HepG2 (cell line): ENCODE measurements at regions of chr9 and their contacts with region 1.

Region 1: DNA sequence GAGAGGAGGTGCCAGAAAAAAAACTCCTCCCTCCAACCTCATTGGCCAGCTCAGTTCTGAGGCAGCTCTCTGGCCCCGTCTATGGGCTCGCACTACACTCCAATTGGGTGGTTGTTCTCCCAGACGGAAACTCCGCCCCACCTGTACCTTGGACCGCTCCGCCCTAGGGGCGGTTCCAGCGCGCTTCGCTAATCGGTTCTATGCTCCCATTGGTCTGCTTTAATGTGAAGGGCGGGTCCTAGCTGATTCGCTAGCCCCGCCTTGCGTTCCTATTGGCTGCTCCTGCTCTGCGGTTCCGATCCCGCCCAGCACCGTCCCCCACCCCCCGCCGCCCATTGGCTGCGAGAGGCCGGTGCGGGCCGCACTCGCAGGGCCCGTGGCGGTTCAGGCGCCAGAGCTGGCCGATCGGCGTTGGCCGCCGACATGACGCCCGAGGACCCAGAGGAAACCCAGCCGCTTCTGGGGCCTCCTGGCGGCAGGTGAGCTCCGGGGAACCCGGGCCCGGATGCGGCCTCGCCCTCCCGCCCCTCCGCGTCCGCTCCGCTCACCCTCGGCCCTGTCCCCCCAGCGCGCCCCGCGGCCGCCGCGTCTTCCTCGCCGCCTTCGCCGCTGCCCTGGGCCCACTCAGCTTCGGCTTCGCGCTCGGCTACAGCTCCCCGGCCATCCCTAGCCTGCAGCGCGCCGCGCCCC is at the start of gene SLC2A8:
- DNase-seq: peak; percentile 99
- ATAC-seq: peak; percentile 83
- H3K4me3 ChIP-seq: peak within 1 kb of the TSS; percentile 86 to 96 (median 88)
- H3K27ac ChIP-seq: peak within 1 kb of the TSS; percentile 89
- H3K4me1 ChIP-seq: peaks cover 72% of the 10 kb centered on the region
- H3K27me3 ChIP-seq: no peaks in the 10 kb centered on the region
- CTCF ChIP-seq: peak; percentile 48
- EP300 ChIP-seq: no peak
- POLR2A ChIP-seq: peak in 1 of 2 experiments; percentile 89; a peak in 2 of 4 replicates
- RAD21 ChIP-seq: peak; percentile 85
- total RNA-seq, gene SLC2A8: 24.0 and 48.6 TPM in 2 replicates

Region 2: GRCh38 chr9:127214421-127215267 is 182.3 kb before region 1 on chr9:
- CTCF ChIA-PET with region 1: no interaction called
- POLR2A ChIA-PET with region 1: interaction called, 8 read pairs
- in situ Hi-C with region 1: loop called (anchors 5 kb)
- intact Hi-C with region 1: loop called (anchors 1 kb)
- DNase-seq: peak; percentile 69
- ATAC-seq: peak; percentile 67
- H3K4me3 ChIP-seq: no peak overlapping the region
- H3K27ac ChIP-seq: no peak overlapping the region
- H3K4me1 ChIP-seq: peaks cover 24% of the 10 kb centered on the region
- H3K27me3 ChIP-seq: peaks cover 0 to 2% of the 10 kb centered on the region in 2 experiments; a peak in 1 of 5 replicates
- CTCF ChIP-seq: peak; percentile 84
- EP300 ChIP-seq: no peak
- POLR2A ChIP-seq: no peak
- RAD21 ChIP-seq: peak; percentile 78

Region 3: DNA sequence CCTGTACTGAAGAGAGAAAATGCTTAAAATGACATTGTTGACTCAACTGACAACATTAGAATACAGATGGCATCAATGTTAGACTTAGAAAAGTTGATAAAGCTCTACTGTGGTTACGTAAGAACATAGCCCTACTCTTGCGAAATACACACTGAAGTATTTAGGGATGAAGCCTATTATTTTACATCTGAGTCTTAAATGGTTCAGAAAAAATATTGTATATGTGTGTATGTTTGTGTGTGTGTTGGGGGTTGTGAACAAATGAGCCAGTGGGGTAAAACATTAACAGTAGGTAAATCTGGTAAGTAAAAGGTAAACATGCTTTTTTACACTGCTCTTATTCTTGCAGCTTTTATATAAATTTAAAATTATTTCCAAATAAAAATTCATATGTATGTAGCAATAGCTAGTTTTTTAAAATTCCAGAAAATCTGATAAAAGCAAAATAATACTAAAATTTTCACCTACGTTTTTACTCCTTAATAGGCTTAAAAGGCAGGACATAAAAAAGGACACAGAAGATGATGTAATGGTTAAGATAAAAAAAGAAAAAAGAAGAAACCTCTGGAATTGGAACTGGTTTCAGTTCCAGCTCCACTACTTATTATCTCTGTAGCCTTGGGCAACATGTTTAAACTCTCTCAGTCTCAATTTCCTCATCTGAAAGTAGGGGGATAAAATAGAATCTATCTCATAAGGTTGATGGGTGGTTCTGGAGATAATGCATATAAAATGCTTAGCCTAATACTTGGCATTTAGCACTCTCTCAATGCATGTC is 88.1 kb before region 1 on chr9:
- CTCF ChIA-PET with region 1: interaction called, 5 read pairs
- POLR2A ChIA-PET with region 1: interaction called, 6 read pairs
- in situ Hi-C with region 1: no loop called
- intact Hi-C with region 1: loop called (anchors 5 kb)
- DNase-seq: peak; percentile 53
- ATAC-seq: no peak
- H3K4me3 ChIP-seq: no peak overlapping the region
- H3K27ac ChIP-seq: no peak overlapping the region
- H3K4me1 ChIP-seq: peaks cover 30% of the 10 kb centered on the region
- H3K27me3 ChIP-seq: no peaks in the 10 kb centered on the region
- CTCF ChIP-seq: no peak
- EP300 ChIP-seq: peak in 1 of 2 experiments; percentile 23; a peak in 2 of 4 replicates
- POLR2A ChIP-seq: no peak
- RAD21 ChIP-seq: no peak

Region 4: GRCh38 chr9:127360829-127361228 is 36.1 kb before region 1 on chr9:
- CTCF ChIA-PET with region 1: interaction called, 32 read pairs
- POLR2A ChIA-PET with region 1: interaction called, 35 read pairs
- in situ Hi-C with region 1: loop called (anchors 5 kb)
- intact Hi-C with region 1: loop called (anchors 1 kb)
- DNase-seq: peak; percentile 68
- ATAC-seq: peak; percentile 94
- H3K4me3 ChIP-seq: no peak overlapping the region
- H3K27ac ChIP-seq: no peak overlapping the region
- H3K4me1 ChIP-seq: no peaks in the 10 kb centered on the region
- H3K27me3 ChIP-seq: no peaks in the 10 kb centered on the region
- CTCF ChIP-seq: peak; percentile 76
- EP300 ChIP-seq: no peak
- POLR2A ChIP-seq: no peak
- RAD21 ChIP-seq: peak; percentile 80

Region 5: DNA sequence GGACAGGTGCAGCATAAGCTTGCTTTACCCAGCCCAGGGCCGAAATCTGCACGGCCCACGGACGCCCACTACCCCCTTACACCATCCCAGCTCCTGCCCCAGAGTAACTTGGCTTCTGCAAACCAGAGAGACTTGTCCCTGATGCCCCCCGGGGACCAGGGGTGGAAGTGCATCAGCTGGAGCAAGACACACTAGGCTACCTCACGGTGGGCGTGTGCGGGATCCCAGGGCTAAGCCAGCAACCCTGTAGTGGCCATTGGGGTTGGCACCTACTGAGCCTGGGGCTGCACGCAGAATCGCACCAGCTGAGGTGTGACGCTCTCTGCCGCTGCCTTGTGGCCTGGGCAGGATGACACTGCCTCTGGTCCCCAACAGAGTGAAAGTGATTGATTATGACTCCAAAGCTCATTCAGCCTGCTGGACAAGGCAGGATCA is 21.1 kb after region 1 on chr9:
- CTCF ChIA-PET with region 1: no interaction called
- POLR2A ChIA-PET with region 1: interaction called, 28 read pairs
- in situ Hi-C with region 1: no loop called
- intact Hi-C with region 1: no loop called
- DNase-seq: peak; percentile 44
- ATAC-seq: peak; percentile 82
- H3K4me3 ChIP-seq: no peak overlapping the region
- H3K27ac ChIP-seq: no peak overlapping the region
- H3K4me1 ChIP-seq: peaks cover 29% of the 10 kb centered on the region
- H3K27me3 ChIP-seq: no peaks in the 10 kb centered on the region
- CTCF ChIP-seq: peak; percentile 68
- EP300 ChIP-seq: no peak
- POLR2A ChIP-seq: no peak
- RAD21 ChIP-seq: peak; percentile 29; the same call in 1 of the 2 replicates

Region 6: GRCh38 chr9:127450830-127451724 is 54.1 kb after region 1 on chr9 and contains the starts of genes LRSAM1 and RPL12:
- CTCF ChIA-PET with region 1: no interaction called
- POLR2A ChIA-PET with region 1: interaction called, 22 read pairs
- in situ Hi-C with region 1: no loop called
- intact Hi-C with region 1: loop called (anchors 5 kb)
- DNase-seq: peak; percentile 86
- ATAC-seq: peak; percentile 66
- H3K4me3 ChIP-seq: peak within 1 kb of the TSS; percentile 85 to 97 (median 93)
- H3K27ac ChIP-seq: peak within 1 kb of the TSS; percentile 83
- H3K4me1 ChIP-seq: peaks cover 36% of the 10 kb centered on the region
- H3K27me3 ChIP-seq: no peaks in the 10 kb centered on the region; a peak in 1 of 5 replicates
- CTCF ChIP-seq: no peak
- EP300 ChIP-seq: 0 out of 4 replicates have a peak, but pooled peaks have one; percentile 20 to 25
- POLR2A ChIP-seq: peak; percentile 99 to 100
- RAD21 ChIP-seq: peak; percentile 41
- total RNA-seq, gene LRSAM1: 4.6 and 8.7 TPM in 2 replicates
- total RNA-seq, gene RPL12: 1,551 and 1,660 TPM in 2 replicates